ENCODE measurements at regions of chr4 and their contacts with region 1.

Region 1: GRCh38 chr4:2402029-2402428 is 16.4 kb downstream of the ZFYVE28 start:
- DNase-seq: no peak
- H3K4me3 ChIP-seq: peak overlapping the region; percentile 14
- CTCF ChIP-seq: no peak

Region 2: DNA sequence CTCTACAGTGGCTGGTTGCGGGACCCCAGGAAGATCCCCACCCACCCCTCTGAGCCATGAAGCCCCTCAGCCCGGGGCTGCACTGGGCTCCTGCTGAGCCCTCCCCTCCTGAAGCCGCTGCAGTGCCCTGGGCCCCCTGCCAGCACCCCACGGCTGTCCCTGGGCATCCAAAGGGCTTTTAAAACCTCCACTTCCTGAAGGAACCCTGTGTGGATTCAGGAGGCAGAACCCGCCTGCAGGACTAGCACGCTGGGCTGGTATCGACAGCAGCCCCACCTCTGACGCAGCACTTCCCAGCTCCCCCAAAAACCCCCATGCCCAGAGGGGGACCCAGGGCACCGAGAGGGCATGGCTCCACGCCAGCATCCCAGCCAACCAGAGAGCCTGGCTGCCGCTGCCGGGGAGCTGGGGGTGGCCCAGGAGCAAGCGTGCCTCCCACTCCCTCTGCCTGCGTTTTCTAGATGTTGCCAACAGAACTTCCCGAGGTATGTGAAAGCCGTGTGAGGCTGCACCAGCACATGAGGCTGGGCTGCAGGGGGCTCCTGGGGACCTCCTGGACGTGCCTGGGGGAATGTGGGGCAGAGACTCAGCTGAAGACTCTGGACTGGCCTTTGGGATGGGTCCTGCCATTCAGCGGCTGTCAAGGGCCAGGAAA is 146.4 kb before region 1 on chr4:
- in situ Hi-C with region 1: loop called (anchors 5 kb)
- DNase-seq: peak; percentile 33
- H3K4me3 ChIP-seq: peak overlapping the region; percentile 14
- CTCF ChIP-seq: peak; percentile 8

Region 3: DNA sequence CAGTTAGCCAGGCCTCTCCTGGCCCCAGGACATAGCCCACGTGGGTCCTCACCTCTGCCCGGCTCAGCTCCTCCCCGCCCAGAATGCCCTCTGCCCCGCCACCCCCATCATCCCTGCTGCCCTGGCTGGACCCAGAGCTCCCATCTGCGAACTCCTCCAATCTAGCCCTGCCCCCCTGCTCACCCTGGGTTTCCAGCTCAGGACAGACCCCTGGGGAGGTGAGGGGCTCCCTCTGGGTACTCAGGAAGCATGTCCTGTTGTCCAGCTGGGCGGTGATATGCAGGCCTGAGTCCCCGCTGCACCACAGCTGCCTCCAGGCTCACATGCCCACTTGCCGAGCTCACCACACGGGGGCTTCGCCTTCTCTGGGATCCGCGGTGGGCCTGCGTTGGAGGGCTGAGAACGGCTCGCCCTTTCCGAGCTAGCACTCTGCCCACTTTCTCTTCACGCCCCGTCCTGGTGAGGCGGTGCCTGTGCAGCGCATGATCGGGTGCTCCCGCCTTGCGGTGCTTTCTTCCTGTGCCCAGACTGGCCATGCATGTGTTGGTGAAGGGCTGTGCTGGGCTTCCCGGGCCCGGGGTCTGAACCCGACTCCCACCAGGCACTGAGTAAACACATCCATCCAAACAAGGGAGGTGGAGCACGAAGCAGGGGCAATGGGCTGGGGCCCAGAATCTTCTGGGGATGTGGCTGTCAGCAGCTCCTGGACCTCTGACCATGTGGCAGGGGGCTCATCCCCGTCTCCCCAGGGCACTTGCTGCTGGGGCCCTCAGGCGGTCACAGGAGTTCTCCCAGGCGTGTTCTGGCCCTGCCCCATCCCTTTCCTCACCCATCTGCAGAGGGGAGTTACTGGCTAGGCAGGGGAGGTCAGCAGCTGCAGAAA is 965.1 kb after region 1 on chr4:
- in situ Hi-C with region 1: no loop called
- DNase-seq: no peak
- H3K4me3 ChIP-seq: no peak overlapping the region
- CTCF ChIP-seq: no peak

Measured in astrocyte of the cerebellum (primary cell).